ENCODE measurements at regions of chr19 and their contacts with region 1.

Region 1: DNA sequence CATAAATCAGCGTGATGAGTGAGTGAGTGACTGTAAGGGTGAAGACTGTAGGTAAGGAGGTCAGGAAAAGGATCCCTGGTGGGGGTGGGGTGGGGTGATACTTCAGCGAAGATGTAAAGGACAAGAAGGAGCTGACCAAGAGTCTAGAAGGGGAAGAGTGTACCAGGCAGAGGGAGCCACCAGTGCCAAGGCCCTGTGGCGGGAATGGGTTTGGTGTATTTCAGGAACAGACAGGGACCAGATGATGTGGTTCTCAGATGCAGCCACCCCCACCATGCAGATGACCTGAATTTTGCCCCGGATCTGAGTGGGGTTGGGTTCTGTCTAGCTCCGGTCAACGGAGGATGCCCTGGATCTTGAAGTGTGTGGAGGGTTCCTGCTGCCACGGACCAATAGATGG is 30.1 kb upstream of the SLC7A10 start:
- DNase-seq: no peak
- H3K4me3 ChIP-seq: no peak overlapping the region
- H3K27ac ChIP-seq: no peak overlapping the region
- H3K4me1 ChIP-seq: no peaks in the 10 kb centered on the region
- H3K27me3 ChIP-seq: no peaks in the 10 kb centered on the region
- CTCF ChIP-seq: no peak

Region 2: GRCh38 chr19:33535226-33535625 is 279.4 kb after region 1 on chr19:
- CTCF ChIA-PET with region 1: no interaction called
- POLR2A ChIA-PET with region 1: interaction called, 11 read pairs
- intact Hi-C with region 1: no loop called
- DNase-seq: no peak
- H3K4me3 ChIP-seq: no peak overlapping the region
- H3K27ac ChIP-seq: no peak overlapping the region
- H3K4me1 ChIP-seq: no peaks in the 10 kb centered on the region
- H3K27me3 ChIP-seq: peaks cover 13% of the 10 kb centered on the region
- CTCF ChIP-seq: no peak

Measured in A673 (cell line).